Left colon (tissue), 2 donors: ENCODE measurements at regions of chr6 and their contacts with region 1.

Region 1: DNA sequence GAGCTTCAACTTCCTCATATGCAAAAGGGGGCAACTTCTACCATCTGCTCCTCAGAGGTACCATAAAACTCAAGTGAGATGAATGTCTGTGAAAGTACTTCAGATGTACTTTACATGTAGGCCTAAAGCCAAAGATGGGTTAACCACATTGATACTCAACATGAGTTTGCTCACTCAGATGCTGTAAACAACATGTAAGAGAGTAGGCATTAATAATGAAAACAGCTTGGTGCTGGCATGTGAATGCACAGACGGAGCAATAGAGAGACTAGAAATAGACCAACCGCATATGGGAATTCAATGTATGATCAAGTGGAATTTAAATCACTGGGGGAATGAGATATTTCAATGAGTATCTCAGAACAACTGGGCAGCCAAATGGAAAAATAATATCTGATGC is 143.8 kb upstream of the CDYL start:
- DNase-seq: no peak
- ATAC-seq: no peak

Region 2: DNA sequence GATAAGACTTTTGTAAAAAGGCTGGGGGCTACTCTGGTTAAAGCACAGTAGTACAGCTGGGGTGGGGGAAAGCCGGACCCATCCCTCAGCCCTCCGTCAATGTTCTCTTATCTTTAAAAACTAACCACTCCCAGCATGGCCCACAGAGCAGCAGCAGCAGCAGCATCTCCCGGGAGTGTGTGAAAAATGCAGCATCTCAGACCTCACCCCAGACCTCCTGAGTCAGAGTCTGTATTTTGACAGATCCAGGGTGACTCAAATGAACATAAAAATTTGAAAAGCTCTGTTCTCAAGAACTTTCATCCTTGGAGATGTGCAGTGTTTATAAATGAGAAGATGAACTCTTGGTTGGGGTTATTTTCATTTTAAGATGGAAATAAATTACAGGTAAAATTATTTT is 219.3 kb before region 1 on chr6:
- intact Hi-C with region 1: loop called in 1 of 2 experiments (anchors 5 kb)
- DNase-seq: no peak
- ATAC-seq: no peak

Region 3: GRCh38 chr6:4889701-4890100 is 257.3 kb after region 1 on chr6:
- intact Hi-C with region 1: no loop called
- DNase-seq: no peak
- ATAC-seq: peak; percentile 61